ENCODE measurements at regions of chr19 and their contacts with region 1.

Region 1: GRCh38 chr19:12596485-12596884 is 14.1 kb downstream of the ZNF490 start:
- DNase-seq: no peak
- H3K4me3 ChIP-seq: no peak overlapping the region
- H3K27ac ChIP-seq: no peak overlapping the region
- H3K4me1 ChIP-seq: no peaks in the 10 kb centered on the region
- H3K27me3 ChIP-seq: no peaks in the 10 kb centered on the region
- CTCF ChIP-seq: no peak
- POLR2A ChIP-seq: no peak

Region 2: GRCh38 chr19:12666265-12667048 is 70.0 kb after region 1 on chr19 and contains the starts of genes MAN2B1 and WDR83:
- intact Hi-C with region 1: loop called (anchors 2 kb)
- DNase-seq: peak; percentile 61 to 68
- H3K4me3 ChIP-seq: peak within 1 kb of the TSS; percentile 62 to 89 (median 89)
- H3K27ac ChIP-seq: peak within 1 kb of the TSS; percentile 56 to 73
- H3K4me1 ChIP-seq: peaks cover 13 to 22% of the 10 kb centered on the region in 2 donors
- H3K27me3 ChIP-seq: no peaks in the 10 kb centered on the region
- CTCF ChIP-seq: no peak
- POLR2A ChIP-seq: no peak
- total RNA-seq, gene MAN2B1: 45.6 to 118 (median 49.0) TPM
- total RNA-seq, gene WDR83: 8.2 to 13.8 (median 10.2) TPM